ENCODE measurements at regions of chr5 and their contacts with region 1.

Region 1: DNA sequence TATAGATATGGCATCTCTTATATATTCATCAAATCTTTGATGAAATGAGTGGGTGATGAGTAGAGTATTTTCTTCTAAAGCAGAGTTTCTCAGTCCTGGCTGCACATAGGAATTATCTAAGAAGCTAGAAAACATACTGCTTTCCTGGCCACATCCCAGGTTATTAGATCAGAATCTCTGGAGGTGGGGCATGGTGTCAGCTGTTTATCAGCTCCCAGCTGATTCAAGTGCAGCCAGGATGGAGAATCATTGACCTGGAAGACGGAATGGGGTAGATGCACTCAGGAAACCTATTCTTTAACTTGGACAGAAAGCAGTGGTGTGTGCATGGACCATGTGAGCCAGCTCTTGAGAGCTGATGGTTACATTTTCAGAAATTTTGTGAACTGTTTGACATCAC is 108.1 kb upstream of the IL6ST start:
- DNase-seq: no peak
- ATAC-seq: no peak
- H3K4me3 ChIP-seq: no peak overlapping the region
- H3K4me3 Mint-ChIP-seq: no peak overlapping the region
- H3K27ac ChIP-seq: no peak overlapping the region
- H3K27ac Mint-ChIP-seq: peak overlapping the region; percentile 49
- H3K4me1 ChIP-seq: peaks cover 65% of the 10 kb centered on the region
- H3K4me1 Mint-ChIP-seq: peaks cover 64% of the 10 kb centered on the region
- H3K27me3 ChIP-seq: no peaks in the 10 kb centered on the region
- H3K27me3 Mint-ChIP-seq: no peaks in the 10 kb centered on the region
- CTCF ChIP-seq: no peak

Region 2: GRCh38 chr5:55377810-55378209 is 725.1 kb before region 1 on chr5:
- CTCF ChIA-PET with region 1: no interaction called
- POLR2A ChIA-PET with region 1: no interaction called
- intact Hi-C with region 1: no loop called
- DNase-seq: no peak
- ATAC-seq: no peak
- H3K4me3 ChIP-seq: no peak overlapping the region
- H3K4me3 Mint-ChIP-seq: no peak overlapping the region
- H3K27ac ChIP-seq: no peak overlapping the region
- H3K27ac Mint-ChIP-seq: peak overlapping the region; percentile 49
- H3K4me1 ChIP-seq: no peaks in the 10 kb centered on the region
- H3K4me1 Mint-ChIP-seq: no peaks in the 10 kb centered on the region
- H3K27me3 ChIP-seq: no peaks in the 10 kb centered on the region
- H3K27me3 Mint-ChIP-seq: no peaks in the 10 kb centered on the region
- CTCF ChIP-seq: no peak

Region 3: DNA sequence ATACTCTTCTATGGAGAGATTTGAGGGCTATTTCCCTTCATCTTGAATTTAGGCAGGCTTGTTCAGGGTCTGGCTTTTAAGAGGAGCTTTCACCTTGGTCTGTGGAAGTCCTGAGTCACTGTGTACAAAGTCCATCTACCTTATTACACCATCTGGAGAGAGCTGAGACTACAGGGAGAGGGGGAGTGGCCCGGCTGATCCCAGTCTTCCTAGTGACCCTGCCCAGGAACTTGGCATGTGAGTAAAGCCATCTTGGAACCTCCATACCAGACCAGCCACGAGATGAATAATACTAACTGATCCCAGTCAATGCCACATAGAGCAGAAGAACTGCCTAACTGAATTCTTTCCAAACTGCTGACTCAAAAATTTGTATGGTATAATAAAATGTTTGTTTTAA is 99.7 kb before region 1 on chr5:
- CTCF ChIA-PET with region 1: no interaction called
- POLR2A ChIA-PET with region 1: no interaction called
- intact Hi-C with region 1: no loop called
- DNase-seq: no peak
- ATAC-seq: no peak
- H3K4me3 ChIP-seq: no peak overlapping the region
- H3K4me3 Mint-ChIP-seq: no peak overlapping the region
- H3K27ac ChIP-seq: no peak overlapping the region
- H3K27ac Mint-ChIP-seq: no peak overlapping the region
- H3K4me1 ChIP-seq: peaks cover 13% of the 10 kb centered on the region
- H3K4me1 Mint-ChIP-seq: peaks cover 17% of the 10 kb centered on the region
- H3K27me3 ChIP-seq: no peaks in the 10 kb centered on the region
- H3K27me3 Mint-ChIP-seq: no peaks in the 10 kb centered on the region
- CTCF ChIP-seq: no peak

Region 4: GRCh38 chr5:56064984-56065383 is 37.9 kb before region 1 on chr5:
- CTCF ChIA-PET with region 1: interaction called, 3 read pairs
- POLR2A ChIA-PET with region 1: no interaction called
- intact Hi-C with region 1: loop called (anchors 5 kb)
- DNase-seq: no peak
- ATAC-seq: no peak
- H3K4me3 ChIP-seq: no peak overlapping the region
- H3K4me3 Mint-ChIP-seq: no peak overlapping the region
- H3K27ac ChIP-seq: no peak overlapping the region
- H3K27ac Mint-ChIP-seq: no peak overlapping the region
- H3K4me1 ChIP-seq: peaks cover 40% of the 10 kb centered on the region
- H3K4me1 Mint-ChIP-seq: peaks cover 49% of the 10 kb centered on the region
- H3K27me3 ChIP-seq: no peaks in the 10 kb centered on the region
- H3K27me3 Mint-ChIP-seq: no peaks in the 10 kb centered on the region
- CTCF ChIP-seq: no peak

Region 5: GRCh38 chr5:56080375-56081052 is 22.4 kb before region 1 on chr5:
- CTCF ChIA-PET with region 1: no interaction called
- POLR2A ChIA-PET with region 1: no interaction called
- intact Hi-C with region 1: no loop called
- DNase-seq: no peak
- ATAC-seq: peak; percentile 20
- H3K4me3 ChIP-seq: no peak overlapping the region
- H3K4me3 Mint-ChIP-seq: no peak overlapping the region
- H3K27ac ChIP-seq: no peak overlapping the region
- H3K27ac Mint-ChIP-seq: peak overlapping the region; percentile 70
- H3K4me1 ChIP-seq: peaks cover 24% of the 10 kb centered on the region
- H3K4me1 Mint-ChIP-seq: peaks cover 25% of the 10 kb centered on the region
- H3K27me3 ChIP-seq: no peaks in the 10 kb centered on the region
- H3K27me3 Mint-ChIP-seq: no peaks in the 10 kb centered on the region
- CTCF ChIP-seq: no peak

Region 6: GRCh38 chr5:56148453-56148971 is 45.6 kb after region 1 on chr5:
- CTCF ChIA-PET with region 1: no interaction called
- POLR2A ChIA-PET with region 1: no interaction called
- intact Hi-C with region 1: loop called in 1 of 2 experiments (anchors 5 kb)
- DNase-seq: peak in 5 of 9 experiments; percentile 27 to 67 (median 36)
- ATAC-seq: peak; percentile 64
- H3K4me3 ChIP-seq: no peak overlapping the region
- H3K4me3 Mint-ChIP-seq: no peak overlapping the region
- H3K27ac ChIP-seq: peak overlapping the region in 1 of 2 experiments; percentile 29
- H3K27ac Mint-ChIP-seq: peak overlapping the region; percentile 76
- H3K4me1 ChIP-seq: peaks cover 49% of the 10 kb centered on the region
- H3K4me1 Mint-ChIP-seq: peaks cover 61% of the 10 kb centered on the region
- H3K27me3 ChIP-seq: no peaks in the 10 kb centered on the region
- H3K27me3 Mint-ChIP-seq: no peaks in the 10 kb centered on the region
- CTCF ChIP-seq: no peak